IMR-90 (cell line): ENCODE measurements at regions of chr14 and their contacts with region 1.

Region 1: DNA sequence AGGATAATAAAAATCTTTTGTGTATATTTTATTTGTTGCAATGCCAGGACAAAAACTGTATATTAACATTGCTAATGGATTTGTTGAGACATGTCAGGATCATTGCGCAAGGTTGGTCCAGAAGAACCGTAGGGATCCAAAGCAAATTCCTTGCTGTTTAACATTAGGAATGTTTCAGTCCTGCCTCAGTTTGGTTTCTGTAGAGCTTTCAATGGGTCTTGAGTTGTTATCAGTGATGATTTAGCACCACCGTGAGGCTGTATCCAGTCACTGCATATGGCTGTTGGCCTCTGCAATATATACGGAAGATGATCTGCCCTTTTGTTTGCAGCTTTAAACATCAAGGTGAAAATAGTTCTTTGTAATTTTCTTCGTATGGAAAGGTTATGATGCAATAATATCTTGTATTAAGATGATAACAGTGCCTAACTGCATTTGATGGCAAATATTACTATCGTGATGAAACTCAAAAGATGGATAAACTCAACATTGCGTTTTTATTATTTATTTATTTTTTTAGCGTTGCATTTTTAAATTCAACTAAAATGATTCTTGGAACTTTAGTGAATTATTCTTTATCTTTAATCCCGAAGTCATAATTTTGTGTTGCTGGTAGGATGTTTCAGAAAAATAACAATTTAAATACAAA is 231.2 kb downstream of the AKAP6 start:
- DNase-seq: peak; percentile 82
- ATAC-seq: peak; percentile 91
- H3K4me3 ChIP-seq: no peak overlapping the region
- H3K27ac ChIP-seq: no peak overlapping the region
- H3K4me1 ChIP-seq: peaks cover 2% of the 10 kb centered on the region; the same call in 1 of the 2 replicates
- H3K27me3 ChIP-seq: no peaks in the 10 kb centered on the region
- CTCF ChIP-seq: peak; percentile 90
- POLR2A ChIP-seq: no peak
- RAD21 ChIP-seq: peak; percentile 92

Region 2: GRCh38 chr14:31360919-31361662 is 1199.2 kb before region 1 on chr14:
- CTCF ChIA-PET with region 1: no interaction called
- POLR2A ChIA-PET with region 1: no interaction called
- dilution Hi-C with region 1: no loop called
- in situ Hi-C with region 1: no loop called
- intact Hi-C with region 1: loop called (anchors 1 kb)
- DNase-seq: peak; percentile 64
- ATAC-seq: peak; percentile 66
- H3K4me3 ChIP-seq: no peak overlapping the region
- H3K27ac ChIP-seq: no peak overlapping the region
- H3K4me1 ChIP-seq: peaks cover 3% of the 10 kb centered on the region
- H3K27me3 ChIP-seq: no peaks in the 10 kb centered on the region
- CTCF ChIP-seq: no peak
- POLR2A ChIP-seq: no peak
- RAD21 ChIP-seq: no peak

Region 3: DNA sequence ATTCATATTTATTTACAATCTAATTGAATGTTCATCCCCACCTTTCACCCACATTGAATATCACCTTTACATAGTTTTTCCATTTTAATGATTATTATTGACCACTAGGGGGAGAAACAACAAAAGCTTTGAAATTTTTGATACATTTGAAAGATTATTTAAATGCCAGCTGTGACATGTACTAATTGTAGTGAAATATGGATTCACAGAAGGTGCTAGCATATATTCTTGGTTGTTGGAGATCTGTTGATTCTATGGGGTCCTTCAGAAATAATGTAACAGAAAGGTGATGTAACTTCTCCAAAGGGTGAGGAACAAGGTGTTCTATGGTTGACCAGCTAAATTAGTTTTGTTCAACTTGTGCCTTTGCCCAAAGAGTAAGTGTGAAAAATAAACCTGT is 1050.1 kb before region 1 on chr14:
- CTCF ChIA-PET with region 1: interaction called, 3 read pairs
- POLR2A ChIA-PET with region 1: no interaction called
- dilution Hi-C with region 1: no loop called
- in situ Hi-C with region 1: no loop called
- intact Hi-C with region 1: loop called (anchors 1 kb)
- DNase-seq: peak; percentile 10
- ATAC-seq: no peak
- H3K4me3 ChIP-seq: no peak overlapping the region
- H3K27ac ChIP-seq: no peak overlapping the region
- H3K4me1 ChIP-seq: peaks cover 5% of the 10 kb centered on the region
- H3K27me3 ChIP-seq: peaks cover 3% of the 10 kb centered on the region; the same call in 1 of the 2 replicates
- CTCF ChIP-seq: peak; percentile 55
- POLR2A ChIP-seq: no peak
- RAD21 ChIP-seq: peak; percentile 58

Region 4: GRCh38 chr14:31926123-31926522 is 634.2 kb before region 1 on chr14:
- CTCF ChIA-PET with region 1: interaction called, 3 read pairs
- POLR2A ChIA-PET with region 1: no interaction called
- dilution Hi-C with region 1: no loop called
- in situ Hi-C with region 1: no loop called
- intact Hi-C with region 1: loop called (anchors 5 kb)
- DNase-seq: peak; percentile 53
- ATAC-seq: no peak
- H3K4me3 ChIP-seq: no peak overlapping the region
- H3K27ac ChIP-seq: no peak overlapping the region
- H3K4me1 ChIP-seq: peaks cover 8% of the 10 kb centered on the region
- H3K27me3 ChIP-seq: no peaks in the 10 kb centered on the region
- CTCF ChIP-seq: peak; percentile 51
- POLR2A ChIP-seq: no peak
- RAD21 ChIP-seq: peak; percentile 44

Region 5: DNA sequence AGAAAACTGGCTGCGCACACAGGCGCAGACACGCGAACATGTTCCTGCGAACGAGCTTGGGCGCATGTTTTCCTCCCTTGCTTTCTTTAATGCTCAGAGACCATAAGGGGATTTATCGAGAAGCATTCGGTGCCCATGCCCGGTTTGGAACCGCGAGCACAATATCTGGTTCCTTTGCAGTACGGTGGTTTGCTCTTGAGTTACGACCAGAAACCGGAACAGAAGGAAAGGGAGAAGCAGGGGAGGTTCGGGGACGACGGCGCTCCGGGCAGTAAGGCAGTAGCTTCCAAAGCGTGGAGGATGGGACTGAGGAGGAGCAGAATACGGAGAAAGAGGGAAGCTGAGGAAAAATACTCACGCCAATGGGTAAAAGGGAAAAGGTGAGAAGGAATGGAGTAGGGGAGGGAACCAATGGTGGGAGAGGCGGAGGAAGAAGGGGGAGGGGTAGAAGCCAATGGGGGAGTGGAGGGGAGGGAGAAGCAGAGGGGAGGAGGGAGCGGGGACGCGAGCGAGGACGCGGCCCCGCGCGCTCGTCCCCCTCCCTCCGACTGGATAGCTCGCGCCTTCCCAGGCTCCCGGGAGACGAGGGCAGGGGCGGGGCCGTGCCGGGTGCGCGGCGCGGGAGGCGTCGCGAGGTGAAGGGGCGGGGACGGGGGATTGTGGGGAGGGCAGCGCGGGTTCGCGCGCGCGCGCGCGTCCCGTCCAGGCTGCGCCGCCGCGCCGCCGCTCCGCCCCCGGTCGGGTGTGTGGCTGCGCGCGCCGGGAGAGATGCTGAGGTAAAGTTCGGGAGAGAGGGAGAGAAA is 483.9 kb before region 1 on chr14:
- CTCF ChIA-PET with region 1: no interaction called
- POLR2A ChIA-PET with region 1: no interaction called
- dilution Hi-C with region 1: no loop called
- in situ Hi-C with region 1: no loop called
- intact Hi-C with region 1: loop called (anchors 2 kb)
- DNase-seq: peak; percentile 95
- ATAC-seq: peak; percentile 90
- H3K4me3 ChIP-seq: peak overlapping the region; percentile 78
- H3K27ac ChIP-seq: peak overlapping the region; percentile 89
- H3K4me1 ChIP-seq: no peaks in the 10 kb centered on the region
- H3K27me3 ChIP-seq: no peaks in the 10 kb centered on the region
- CTCF ChIP-seq: no peak
- POLR2A ChIP-seq: peak; percentile 35; the same call in 1 of the 2 replicates
- RAD21 ChIP-seq: no peak

Region 6: DNA sequence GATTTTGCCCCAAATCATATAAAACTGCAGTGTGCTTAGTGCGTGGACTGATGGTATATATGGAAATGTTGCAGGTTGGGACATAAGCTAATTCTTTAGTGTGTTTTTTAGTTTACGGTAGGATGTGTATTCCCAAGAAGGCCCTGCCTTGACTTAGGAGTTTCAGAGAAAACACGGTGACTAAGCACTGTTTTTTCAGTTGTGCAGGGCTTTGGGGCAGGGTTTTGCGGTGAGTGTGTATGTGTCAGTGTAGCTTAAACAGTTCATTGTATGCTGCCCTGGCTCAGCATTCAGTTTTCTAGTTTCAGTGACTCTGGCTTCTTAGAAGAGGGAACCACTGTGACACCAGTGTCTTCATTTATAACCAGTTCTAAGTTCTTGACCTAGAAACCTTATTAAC is 130.0 kb before region 1 on chr14:
- CTCF ChIA-PET with region 1: no interaction called
- POLR2A ChIA-PET with region 1: no interaction called
- dilution Hi-C with region 1: no loop called
- in situ Hi-C with region 1: no loop called
- intact Hi-C with region 1: no loop called
- DNase-seq: peak; percentile 69
- ATAC-seq: peak; percentile 48; the same call in 1 of the 2 replicates
- H3K4me3 ChIP-seq: no peak overlapping the region
- H3K27ac ChIP-seq: no peak overlapping the region
- H3K4me1 ChIP-seq: peaks cover 2% of the 10 kb centered on the region; the same call in 1 of the 2 replicates
- H3K27me3 ChIP-seq: no peaks in the 10 kb centered on the region
- CTCF ChIP-seq: no peak
- POLR2A ChIP-seq: no peak
- RAD21 ChIP-seq: no peak

Region 7: GRCh38 chr14:32469388-32470160 is 90.8 kb before region 1 on chr14:
- CTCF ChIA-PET with region 1: interaction called, 4 read pairs
- POLR2A ChIA-PET with region 1: no interaction called
- dilution Hi-C with region 1: no loop called
- in situ Hi-C with region 1: no loop called
- intact Hi-C with region 1: loop called (anchors 1 kb)
- DNase-seq: peak; percentile 76
- ATAC-seq: peak; percentile 55
- H3K4me3 ChIP-seq: no peak overlapping the region
- H3K27ac ChIP-seq: peak overlapping the region; percentile 12; the same call in 1 of the 2 replicates
- H3K4me1 ChIP-seq: peaks cover 20% of the 10 kb centered on the region
- H3K27me3 ChIP-seq: no peaks in the 10 kb centered on the region
- CTCF ChIP-seq: peak; percentile 72
- POLR2A ChIP-seq: no peak
- RAD21 ChIP-seq: peak; percentile 78

Region 8: GRCh38 chr14:33229269-33229929 is 669.1 kb after region 1 on chr14:
- CTCF ChIA-PET with region 1: no interaction called
- POLR2A ChIA-PET with region 1: no interaction called
- dilution Hi-C with region 1: no loop called
- in situ Hi-C with region 1: no loop called
- intact Hi-C with region 1: no loop called
- DNase-seq: no peak
- ATAC-seq: no peak
- H3K4me3 ChIP-seq: no peak overlapping the region
- H3K27ac ChIP-seq: no peak overlapping the region
- H3K4me1 ChIP-seq: no peaks in the 10 kb centered on the region
- H3K27me3 ChIP-seq: no peaks in the 10 kb centered on the region
- CTCF ChIP-seq: no peak
- POLR2A ChIP-seq: no peak
- RAD21 ChIP-seq: no peak